Activated CD4-positive, alpha-beta T cell treated with anti-CD3 and anti-CD28 coated beads, Interleukin-2, amount 10 ng/mL, durations not matched to agents 24 days and 14 days (primary cell): ENCODE measurements at regions of chr3 and their contacts with region 1.

Region 1: GRCh38 chr3:49358217-49358883 is at the start of gene GPX1:
- DNase-seq: peak; percentile 96
- H3K4me3 Mint-ChIP-seq: peak within 1 kb of the TSS; percentile 95
- H3K27ac Mint-ChIP-seq: peak within 1 kb of the TSS; percentile 97
- H3K4me1 Mint-ChIP-seq: peaks cover 21% of the 10 kb centered on the region
- H3K27me3 Mint-ChIP-seq: no peaks in the 10 kb centered on the region
- total RNA-seq, gene GPX1: 190 and 200 TPM in 2 replicates

Region 2: GRCh38 chr3:48716982-48717746 is 641.2 kb before region 1 on chr3 and contains the start of gene IP6K2:
- intact Hi-C with region 1: no loop called
- DNase-seq: peak; percentile 100
- H3K4me3 Mint-ChIP-seq: peak within 1 kb of the TSS; percentile 98
- H3K27ac Mint-ChIP-seq: peak within 1 kb of the TSS; percentile 98
- H3K4me1 Mint-ChIP-seq: peaks cover 29% of the 10 kb centered on the region
- H3K27me3 Mint-ChIP-seq: peaks cover 22% of the 10 kb centered on the region
- total RNA-seq, gene IP6K2: 57.9 and 58.4 TPM in 2 replicates

Region 3: GRCh38 chr3:49428697-49429100 is 70.3 kb after region 1 on chr3:
- intact Hi-C with region 1: loop called (anchors 5 kb)
- DNase-seq: no peak
- H3K4me3 Mint-ChIP-seq: peak overlapping the region; percentile 93
- H3K27ac Mint-ChIP-seq: peak overlapping the region; percentile 94
- H3K4me1 Mint-ChIP-seq: peaks cover 8% of the 10 kb centered on the region
- H3K27me3 Mint-ChIP-seq: no peaks in the 10 kb centered on the region